ENCODE measurements at regions of chr2 and their contacts with region 1.

Region 1: GRCh38 chr2:3309496-3310355 is 67.9 kb downstream of the EIPR1 start:
- H3K4me3 Mint-ChIP-seq: no peak overlapping the region
- H3K27ac Mint-ChIP-seq: no peak overlapping the region
- H3K4me1 Mint-ChIP-seq: no peaks in the 10 kb centered on the region
- H3K27me3 Mint-ChIP-seq: no peaks in the 10 kb centered on the region

Region 2: GRCh38 chr2:3001615-3002560 is 307.8 kb before region 1 on chr2:
- intact Hi-C with region 1: loop called (anchors 5 kb)
- H3K4me3 Mint-ChIP-seq: no peak overlapping the region
- H3K27ac Mint-ChIP-seq: no peak overlapping the region
- H3K4me1 Mint-ChIP-seq: no peaks in the 10 kb centered on the region
- H3K27me3 Mint-ChIP-seq: no peaks in the 10 kb centered on the region

Measured in dendritic cell treated with granulocyte-macrophage colony-stimulating factor and Interleukin-4, amounts not matched to agents 40 ng/mL and 50 ng/mL, for 4 days (primary cell).